ENCODE measurements at regions of chr5 and their contacts with region 1.

Region 1: GRCh38 chr5:31531888-31532710 is at the starts of genes C5orf22 and DROSHA:
- DNase-seq: peak; percentile 87 to 93 (median 88)
- H3K4me3 ChIP-seq: peak within 1 kb of the TSS; percentile 90 to 94
- H3K4me3 Mint-ChIP-seq: peak within 1 kb of the TSS; percentile 98 to 100 (median 98)
- H3K27ac ChIP-seq: peak within 1 kb of the TSS; percentile 67
- H3K27ac Mint-ChIP-seq: peak within 1 kb of the TSS; percentile 87 to 99 (median 96)
- H3K4me1 ChIP-seq: peaks cover 48% of the 10 kb centered on the region
- H3K4me1 Mint-ChIP-seq: peaks cover 35 to 76% (median 54%) of the 10 kb centered on the region in 4 donors
- H3K27me3 ChIP-seq: no peaks in the 10 kb centered on the region
- H3K27me3 Mint-ChIP-seq: no peaks in the 10 kb centered on the region
- total RNA-seq, gene C5orf22: 26.9 to 30.9 TPM
- total RNA-seq, gene DROSHA: 76.1 to 92.6 TPM

Region 2: DNA sequence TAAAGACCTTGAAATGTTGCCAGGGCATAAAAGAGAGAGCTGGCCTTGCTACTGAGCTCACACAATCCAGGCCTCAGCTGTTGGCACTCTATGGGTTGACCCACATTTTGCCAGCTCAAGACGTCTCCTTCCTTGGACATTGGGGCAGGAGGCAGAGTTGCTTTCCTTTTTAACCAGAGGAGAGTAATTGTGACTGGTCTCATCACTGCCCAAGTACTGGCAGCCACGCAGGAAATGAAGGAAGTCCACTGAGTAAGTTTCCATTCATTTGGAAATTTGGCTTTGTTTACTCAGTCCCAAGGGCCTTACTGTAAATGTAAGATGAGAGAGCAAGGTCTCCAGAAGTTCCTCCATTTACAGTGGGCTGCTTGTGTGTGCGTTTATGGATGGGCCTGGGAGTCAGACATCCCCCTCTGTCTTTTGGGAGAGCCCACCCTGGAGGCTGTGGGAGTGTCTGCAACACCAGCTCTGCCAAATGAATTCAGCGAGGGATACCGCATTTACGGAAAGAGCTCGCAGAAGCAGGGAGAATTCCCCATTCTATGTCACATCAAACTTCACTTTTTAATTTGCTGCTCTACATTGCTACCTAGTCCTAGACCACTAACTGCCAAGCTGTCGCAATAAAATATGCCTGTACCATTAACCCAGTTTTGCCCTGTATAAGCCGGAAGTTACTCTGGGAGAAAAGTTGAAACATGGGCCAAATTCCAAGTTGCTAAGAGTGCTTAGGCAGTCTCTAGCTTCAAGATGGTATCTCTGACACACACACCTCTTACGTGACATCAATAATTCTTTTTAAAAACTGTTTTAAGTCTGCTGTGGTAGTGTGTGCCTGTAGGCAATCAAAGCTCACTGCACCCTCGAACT is 82.3 kb after region 1 on chr5:
- CTCF ChIA-PET with region 1: no interaction called
- POLR2A ChIA-PET with region 1: no interaction called
- intact Hi-C with region 1: no loop called
- DNase-seq: no peak
- H3K4me3 ChIP-seq: no peak overlapping the region
- H3K4me3 Mint-ChIP-seq: no peak overlapping the region
- H3K27ac ChIP-seq: no peak overlapping the region
- H3K27ac Mint-ChIP-seq: no peak overlapping the region
- H3K4me1 ChIP-seq: no peaks in the 10 kb centered on the region
- H3K4me1 Mint-ChIP-seq: peaks cover 0 to 2% (median 0%) of the 10 kb centered on the region in 4 donors
- H3K27me3 ChIP-seq: no peaks in the 10 kb centered on the region
- H3K27me3 Mint-ChIP-seq: peaks cover 17 to 18% of the 10 kb centered on the region in 2 donors

Region 3: GRCh38 chr5:32092938-32093812 is 561.1 kb after region 1 on chr5:
- CTCF ChIA-PET with region 1: no interaction called
- POLR2A ChIA-PET with region 1: no interaction called
- intact Hi-C with region 1: loop called (anchors 5 kb)
- DNase-seq: peak; percentile 45 to 64 (median 51)
- H3K4me3 ChIP-seq: no peak overlapping the region
- H3K4me3 Mint-ChIP-seq: no peak overlapping the region
- H3K27ac ChIP-seq: no peak overlapping the region
- H3K27ac Mint-ChIP-seq: peak overlapping the region in 1 of 7 donors; percentile 11
- H3K4me1 ChIP-seq: no peaks in the 10 kb centered on the region
- H3K4me1 Mint-ChIP-seq: peaks cover 3 to 6% (median 5%) of the 10 kb centered on the region in 4 donors
- H3K27me3 ChIP-seq: no peaks in the 10 kb centered on the region
- H3K27me3 Mint-ChIP-seq: no peaks in the 10 kb centered on the region

Measured in CD4-positive, alpha-beta memory T cell (primary cell).